ENCODE measurements at regions of chr1 and their contacts with region 1.

Region 1: DNA sequence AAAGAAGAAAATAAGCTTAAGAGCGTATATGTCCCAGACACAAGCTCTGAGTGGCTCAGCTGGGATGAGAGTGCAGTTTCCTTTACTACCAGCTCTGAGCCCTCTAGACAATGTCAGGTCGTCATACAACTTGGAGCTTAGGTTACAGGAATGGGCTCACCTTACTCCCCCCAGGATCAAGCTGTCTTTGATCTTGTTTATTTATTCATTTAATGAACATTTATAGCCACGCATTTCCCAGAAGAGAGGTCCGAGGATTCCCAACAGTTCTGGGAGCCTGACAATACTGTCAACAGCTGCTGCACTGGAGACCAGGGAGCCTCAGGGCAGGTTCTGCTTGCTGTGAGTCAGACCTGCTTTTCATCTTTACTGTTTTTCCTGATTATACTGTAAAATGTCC is 378.9 kb downstream of the PLPP3 start:
- DNase-seq: peak; percentile 31
- H3K4me3 ChIP-seq: no peak overlapping the region
- H3K27me3 ChIP-seq: no peaks in the 10 kb centered on the region
- CTCF ChIP-seq: no peak

Region 2: DNA sequence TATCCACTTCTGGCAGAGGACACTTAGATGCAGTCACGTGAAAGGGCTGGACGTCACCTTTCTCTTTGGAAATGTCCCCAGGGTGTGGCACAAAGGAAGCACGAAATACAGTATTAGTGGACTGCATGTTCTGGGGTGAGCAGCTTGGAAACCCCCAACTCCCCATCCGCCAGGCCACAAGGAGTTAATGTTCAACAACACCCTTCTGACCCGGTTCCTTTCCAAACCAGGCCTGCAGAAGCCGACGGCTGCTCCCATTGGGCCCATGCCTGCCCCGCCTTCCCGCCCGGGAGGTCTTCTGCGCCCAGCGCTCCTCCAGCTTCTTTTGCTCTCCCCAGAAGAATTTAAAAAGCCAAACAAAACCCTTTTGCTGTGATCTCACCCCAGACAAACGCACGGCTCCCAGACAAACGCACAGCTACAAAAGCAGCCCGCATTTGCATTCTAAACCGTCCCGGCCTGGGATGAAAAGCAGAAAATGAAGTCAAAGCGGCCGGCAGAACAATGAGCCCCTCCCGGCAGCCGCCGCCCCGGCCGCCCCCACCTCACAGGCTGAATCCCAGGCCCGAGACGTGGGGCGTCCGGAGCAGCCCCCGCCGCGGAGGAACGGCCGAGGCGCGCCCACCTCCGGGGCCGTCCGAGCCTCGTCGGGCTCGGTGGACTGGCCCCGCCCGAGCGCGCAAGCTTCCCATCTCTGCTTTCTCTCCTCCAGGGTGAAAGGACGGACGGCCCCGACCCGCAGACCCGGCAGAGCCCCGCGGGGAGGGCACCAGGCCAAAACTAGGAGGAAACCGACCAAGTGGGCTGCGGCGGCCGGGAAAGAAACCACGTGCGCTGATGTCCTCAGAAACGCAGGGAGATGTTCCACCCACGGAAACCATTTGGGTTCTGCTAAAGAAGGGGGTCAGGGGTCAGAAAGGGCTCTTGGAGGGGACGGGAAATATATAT is 277.0 kb after region 1 on chr1:
- CTCF ChIA-PET with region 1: no interaction called
- POLR2A ChIA-PET with region 1: interaction called, 15 read pairs
- DNase-seq: no peak
- H3K4me3 ChIP-seq: peak overlapping the region; percentile 49
- H3K27me3 ChIP-seq: no peaks in the 10 kb centered on the region
- CTCF ChIP-seq: no peak

Measured in BJ (cell line).